ENCODE measurements at regions of chr17 and their contacts with region 1.

Region 1: DNA sequence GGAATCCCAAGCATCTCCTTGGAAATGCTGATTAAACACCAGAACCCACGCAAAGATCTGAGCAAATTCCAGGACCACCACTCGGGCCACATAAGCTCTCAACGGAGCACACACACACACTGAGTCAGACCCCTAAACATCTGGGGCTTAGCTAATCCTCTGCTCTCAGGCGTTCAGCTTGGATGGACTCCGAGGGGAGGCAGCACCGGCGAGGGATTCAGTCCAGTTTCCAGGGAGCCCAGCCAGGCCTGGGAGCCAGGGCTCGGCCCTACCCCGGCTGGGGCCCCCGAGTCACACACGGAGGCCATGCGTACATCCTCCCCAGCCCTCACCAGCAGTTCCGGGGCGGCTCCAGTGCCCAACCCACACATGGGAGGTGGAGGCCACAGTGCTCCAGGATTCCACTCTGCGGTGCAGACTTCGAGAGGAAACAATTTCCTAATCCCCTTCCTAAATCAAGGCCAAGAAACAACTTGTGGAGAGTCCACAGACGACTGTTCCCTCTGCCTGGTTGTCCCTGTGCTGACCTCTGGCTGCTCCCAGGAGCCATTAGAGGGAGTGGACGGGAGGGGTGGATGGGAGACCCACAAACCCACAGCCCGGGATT is 70.5 kb downstream of the GAS7 start:
- DNase-seq: peak; percentile 97

Region 2: GRCh38 chr17:10087081-10087754 is 40.7 kb before region 1 on chr17:
- intact Hi-C with region 1: no loop called
- DNase-seq: peak; percentile 43

Region 3: DNA sequence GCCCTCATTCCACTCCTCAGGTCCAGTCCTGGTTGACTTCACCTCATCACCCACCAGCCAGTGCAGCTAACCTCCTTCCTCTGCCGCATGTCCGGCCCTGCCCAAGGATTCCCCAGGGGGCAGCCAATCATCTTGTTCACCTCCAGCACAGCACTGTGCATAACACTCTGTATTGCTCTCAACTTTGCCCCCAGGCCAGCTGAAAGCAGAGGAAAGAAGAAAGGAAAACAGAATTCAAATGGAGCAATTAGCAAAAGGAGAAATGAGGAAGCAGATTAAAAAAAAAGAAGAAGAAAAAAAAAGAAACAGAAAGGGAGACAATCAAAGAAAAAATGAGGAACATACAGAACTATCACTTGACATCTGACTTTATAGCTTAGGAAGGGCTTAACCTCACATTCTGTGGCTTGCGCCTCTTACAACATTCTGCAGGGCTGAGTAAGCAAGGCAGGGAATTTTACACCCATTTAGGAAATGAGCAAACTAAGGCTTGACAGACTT is 44.4 kb after region 1 on chr17:
- intact Hi-C with region 1: loop called in 1 of 2 experiments (anchors 10 kb)
- DNase-seq: no peak

Region 4: GRCh38 chr17:10198509-10199253 is 70.8 kb after region 1 on chr17 and contains the start of gene GAS7:
- intact Hi-C with region 1: loop called in 1 of 2 experiments (anchors 1 kb)
- DNase-seq: peak; percentile 91
- total RNA-seq, gene GAS7: 70.6 to 190 TPM